ENCODE measurements at regions of chr5 and their contacts with region 1.

Region 1: GRCh38 chr5:96079075-96079474 is 117.4 kb upstream of the ELL2 start:
- DNase-seq: peak; percentile 93
- H3K4me3 Mint-ChIP-seq: peak overlapping the region; percentile 25
- H3K27ac Mint-ChIP-seq: peak overlapping the region; percentile 96
- H3K4me1 Mint-ChIP-seq: peaks cover 57% of the 10 kb centered on the region
- H3K27me3 Mint-ChIP-seq: no peaks in the 10 kb centered on the region
- CTCF ChIP-seq: no peak

Region 2: DNA sequence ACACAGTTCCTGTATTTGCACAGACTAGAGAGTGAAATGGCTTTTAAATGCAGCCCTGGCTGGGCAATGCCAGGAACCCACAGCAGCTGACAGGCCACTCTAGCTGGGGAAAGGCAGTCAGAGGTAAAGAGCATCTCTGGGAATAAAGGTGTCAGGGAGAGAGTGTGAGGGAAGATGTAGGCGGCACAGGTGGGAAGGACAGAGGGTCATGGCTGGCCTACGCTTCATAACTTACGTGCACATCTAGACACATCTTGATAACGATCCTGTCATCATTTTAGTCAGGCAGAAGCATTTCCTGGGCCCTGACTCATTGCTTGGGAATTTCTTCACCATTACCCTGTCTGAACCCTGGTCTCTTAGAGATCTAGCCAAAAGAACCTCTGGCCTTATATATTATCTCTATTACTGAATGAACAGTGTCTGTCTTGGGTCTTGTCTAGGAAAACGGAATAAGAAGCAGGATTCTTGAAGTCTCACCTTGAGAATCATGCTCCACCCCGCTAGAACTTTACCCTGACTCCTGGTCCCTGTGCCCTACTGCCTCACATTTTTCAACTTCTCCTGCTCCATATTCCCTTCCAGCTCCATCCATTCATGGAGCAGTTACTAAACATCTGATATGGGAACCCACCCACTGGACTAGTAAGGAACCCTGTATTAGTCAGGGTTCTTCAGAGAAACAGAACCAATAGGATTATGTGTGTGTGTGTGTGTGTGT is 11.0 kb before region 1 on chr5:
- CTCF ChIA-PET with region 1: interaction called, 5 read pairs
- POLR2A ChIA-PET with region 1: interaction called, 14 read pairs
- intact Hi-C with region 1: no loop called
- DNase-seq: peak; percentile 82
- H3K4me3 Mint-ChIP-seq: no peak overlapping the region
- H3K27ac Mint-ChIP-seq: peak overlapping the region; percentile 41
- H3K4me1 Mint-ChIP-seq: peaks cover 37% of the 10 kb centered on the region
- H3K27me3 Mint-ChIP-seq: no peaks in the 10 kb centered on the region
- CTCF ChIP-seq: no peak

Region 3: DNA sequence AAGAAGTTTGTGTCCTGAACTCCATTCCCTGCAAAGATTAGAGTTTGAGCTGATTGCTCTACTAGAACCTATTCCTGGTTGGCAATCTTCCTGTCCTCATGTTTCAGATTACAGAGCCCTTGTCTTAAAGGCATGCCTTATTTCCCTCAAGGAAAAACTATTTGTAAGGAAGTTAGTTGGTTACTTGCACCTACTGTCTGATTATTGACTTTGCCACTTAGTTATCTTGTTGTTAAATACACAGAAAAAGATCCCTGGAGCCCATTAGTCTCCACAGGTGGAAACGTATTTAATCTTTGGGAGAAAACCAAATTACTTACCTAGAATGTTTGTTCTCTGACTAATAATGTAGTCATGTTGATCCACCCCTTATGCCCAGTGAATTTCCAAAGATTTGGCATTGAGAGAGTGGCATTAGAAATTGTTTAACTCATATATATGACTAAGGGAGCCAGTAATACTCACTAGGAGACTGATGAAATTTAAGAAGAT is 14.9 kb after region 1 on chr5:
- CTCF ChIA-PET with region 1: interaction called, 8 read pairs
- POLR2A ChIA-PET with region 1: interaction called, 70 read pairs
- intact Hi-C with region 1: loop called (anchors 1 kb)
- DNase-seq: peak; percentile 90
- H3K4me3 Mint-ChIP-seq: no peak overlapping the region
- H3K27ac Mint-ChIP-seq: peak overlapping the region; percentile 1
- H3K4me1 Mint-ChIP-seq: peaks cover 28% of the 10 kb centered on the region
- H3K27me3 Mint-ChIP-seq: no peaks in the 10 kb centered on the region
- CTCF ChIP-seq: no peak

Region 4: GRCh38 chr5:96113170-96113939 is 34.3 kb after region 1 on chr5:
- CTCF ChIA-PET with region 1: no interaction called
- POLR2A ChIA-PET with region 1: interaction called, 26 read pairs
- intact Hi-C with region 1: no loop called
- DNase-seq: peak; percentile 73
- H3K4me3 Mint-ChIP-seq: no peak overlapping the region
- H3K27ac Mint-ChIP-seq: peak overlapping the region; percentile 87
- H3K4me1 Mint-ChIP-seq: peaks cover 29% of the 10 kb centered on the region
- H3K27me3 Mint-ChIP-seq: no peaks in the 10 kb centered on the region
- CTCF ChIP-seq: no peak

Region 5: GRCh38 chr5:96151891-96152290 is 72.8 kb after region 1 on chr5:
- CTCF ChIA-PET with region 1: no interaction called
- POLR2A ChIA-PET with region 1: interaction called, 15 read pairs
- intact Hi-C with region 1: no loop called
- DNase-seq: no peak
- H3K4me3 Mint-ChIP-seq: no peak overlapping the region
- H3K27ac Mint-ChIP-seq: no peak overlapping the region
- H3K4me1 Mint-ChIP-seq: peaks cover 28% of the 10 kb centered on the region
- H3K27me3 Mint-ChIP-seq: no peaks in the 10 kb centered on the region
- CTCF ChIP-seq: no peak

Region 6: GRCh38 chr5:96220610-96221390 is 141.7 kb after region 1 on chr5:
- CTCF ChIA-PET with region 1: interaction called, 4 read pairs
- POLR2A ChIA-PET with region 1: no interaction called
- intact Hi-C with region 1: loop called (anchors 2 kb)
- DNase-seq: peak; percentile 53
- H3K4me3 Mint-ChIP-seq: no peak overlapping the region
- H3K27ac Mint-ChIP-seq: peak overlapping the region; percentile 87
- H3K4me1 Mint-ChIP-seq: peaks cover 16% of the 10 kb centered on the region
- H3K27me3 Mint-ChIP-seq: no peaks in the 10 kb centered on the region
- CTCF ChIP-seq: no peak